CD8-positive, alpha-beta T cell (primary cell): ENCODE measurements at regions of chr12 and their contacts with region 1.

Region 1: DNA sequence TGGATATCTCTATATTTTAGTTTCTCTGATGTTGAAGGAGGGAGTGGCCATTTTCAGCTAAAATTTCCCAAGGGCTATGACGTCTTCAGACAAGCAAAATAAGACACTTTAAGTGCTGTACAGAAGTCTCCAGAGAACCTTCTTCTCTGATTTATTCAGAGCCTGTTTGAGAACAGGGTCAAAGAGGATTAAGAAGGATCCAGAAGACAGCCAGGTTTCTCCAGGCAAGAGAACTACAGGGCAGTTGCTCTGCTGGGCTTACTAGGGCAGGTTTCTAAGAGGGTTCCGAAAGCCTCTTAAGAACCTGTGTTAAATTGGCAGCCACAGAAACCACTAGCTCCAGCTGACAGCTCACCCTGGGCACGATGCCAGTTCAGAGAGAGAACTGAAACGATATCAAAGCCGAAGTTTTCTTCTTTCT is 1.2 kb downstream of the MGP start:
- DNase-seq: peak; percentile 69 to 94 (median 89)
- ATAC-seq: peak; percentile 90
- H3K4me3 ChIP-seq: no peak overlapping the region
- H3K4me3 Mint-ChIP-seq: peak overlapping the region; percentile 58
- H3K27ac ChIP-seq: peak overlapping the region in 1 of 2 experiments; percentile 7
- H3K27ac Mint-ChIP-seq: peak overlapping the region; percentile 89
- H3K4me1 ChIP-seq: peaks cover 38% of the 10 kb centered on the region
- H3K4me1 Mint-ChIP-seq: peaks cover 37% of the 10 kb centered on the region
- H3K27me3 ChIP-seq: peaks cover 0 to 6% of the 10 kb centered on the region in 2 experiments
- H3K27me3 Mint-ChIP-seq: peaks cover 7% of the 10 kb centered on the region
- CTCF ChIP-seq: no peak

Region 2: DNA sequence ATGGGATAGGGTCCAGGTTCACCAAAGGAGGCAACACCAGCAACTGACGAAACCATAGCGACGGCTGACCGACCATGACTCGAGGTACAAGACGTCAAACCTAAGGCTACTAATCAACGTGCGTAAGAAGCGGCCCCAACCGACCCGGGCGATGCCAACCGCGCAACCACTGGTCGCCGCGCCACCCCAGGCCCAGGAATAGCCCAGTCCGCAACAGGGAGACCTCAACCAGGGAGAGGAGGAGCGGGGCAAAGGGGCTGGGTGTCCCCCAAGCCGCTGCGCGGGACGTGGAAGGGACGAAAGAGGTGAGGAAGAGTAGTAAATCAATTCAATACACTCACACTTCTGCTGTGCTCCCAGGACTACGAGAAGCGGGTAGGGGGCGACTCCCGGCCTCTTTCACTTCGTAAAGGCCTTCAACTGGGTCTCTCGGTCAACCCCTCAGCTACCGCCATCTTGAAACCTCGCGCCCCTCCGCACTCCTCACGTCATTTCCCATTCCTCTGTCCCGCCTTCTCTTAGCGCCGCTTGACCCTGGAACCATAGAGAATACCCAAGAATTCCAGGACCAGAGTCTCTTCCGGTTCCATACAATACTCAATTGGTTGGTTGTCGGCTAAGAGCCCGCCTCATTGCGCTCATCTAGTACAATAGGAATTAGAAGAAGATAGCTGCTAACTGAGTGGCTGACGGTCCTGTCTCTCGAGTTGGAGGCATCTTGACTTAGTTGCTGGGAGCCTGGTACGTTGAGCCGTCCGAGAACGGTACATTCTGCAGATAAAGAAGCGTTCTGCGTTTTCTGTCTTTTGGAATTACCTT is 81.2 kb before region 1 on chr12 and contains the starts of genes C12orf60 and WBP11:
- CTCF ChIA-PET with region 1: no interaction called
- POLR2A ChIA-PET with region 1: no interaction called
- intact Hi-C with region 1: loop called in 1 of 2 experiments (anchors 5 kb)
- DNase-seq: peak; percentile 76 to 98 (median 87)
- ATAC-seq: peak; percentile 94
- H3K4me3 ChIP-seq: peak within 1 kb of the TSS; percentile 86 to 95
- H3K4me3 Mint-ChIP-seq: no peak within 1 kb of the TSS
- H3K27ac ChIP-seq: peak within 1 kb of the TSS; percentile 91 to 98
- H3K27ac Mint-ChIP-seq: no peak within 1 kb of the TSS
- H3K4me1 ChIP-seq: peaks cover 28% of the 10 kb centered on the region
- H3K4me1 Mint-ChIP-seq: peaks cover 12% of the 10 kb centered on the region
- H3K27me3 ChIP-seq: no peaks in the 10 kb centered on the region
- H3K27me3 Mint-ChIP-seq: no peaks in the 10 kb centered on the region
- CTCF ChIP-seq: no peak
- total RNA-seq, gene C12orf60: 0.14 TPM in 1 of 2 experiments, not detected in the other
- total RNA-seq, gene WBP11: 171 to 184 TPM

Region 3: GRCh38 chr12:14920475-14921126 is 36.1 kb after region 1 on chr12:
- CTCF ChIA-PET with region 1: no interaction called
- POLR2A ChIA-PET with region 1: no interaction called
- intact Hi-C with region 1: loop called in 1 of 2 experiments (anchors 5 kb)
- DNase-seq: peak in 2 of 9 experiments; percentile 32 to 40
- ATAC-seq: peak; percentile 65
- H3K4me3 ChIP-seq: no peak overlapping the region
- H3K4me3 Mint-ChIP-seq: peak overlapping the region; percentile 30
- H3K27ac ChIP-seq: peak overlapping the region in 1 of 2 experiments; percentile 36
- H3K27ac Mint-ChIP-seq: peak overlapping the region; percentile 83
- H3K4me1 ChIP-seq: peaks cover 23% of the 10 kb centered on the region
- H3K4me1 Mint-ChIP-seq: peaks cover 30% of the 10 kb centered on the region
- H3K27me3 ChIP-seq: no peaks in the 10 kb centered on the region
- H3K27me3 Mint-ChIP-seq: no peaks in the 10 kb centered on the region
- CTCF ChIP-seq: no peak

Region 4: DNA sequence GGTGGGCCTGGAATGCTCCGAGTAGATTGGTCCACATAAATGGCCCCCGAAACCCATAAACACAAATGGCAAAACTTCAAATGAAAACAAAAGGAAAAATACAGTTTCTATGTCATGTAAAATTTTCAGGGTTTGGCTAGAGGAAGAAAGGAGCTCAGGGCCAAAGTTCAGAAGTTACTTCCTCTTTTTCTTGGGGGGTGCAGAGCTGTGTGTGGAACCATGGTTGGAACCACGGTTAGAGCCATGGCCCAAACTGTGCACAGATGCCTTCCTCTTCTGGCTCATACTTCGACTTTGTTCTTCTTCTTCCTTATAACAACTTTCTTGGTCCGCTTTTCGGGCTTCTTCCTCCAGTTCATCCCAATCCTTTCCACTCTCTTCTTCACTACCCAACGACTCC is 1514.6 kb after region 1 on chr12:
- CTCF ChIA-PET with region 1: no interaction called
- POLR2A ChIA-PET with region 1: no interaction called
- intact Hi-C with region 1: no loop called
- DNase-seq: no peak
- ATAC-seq: no peak
- H3K4me3 ChIP-seq: no peak overlapping the region
- H3K4me3 Mint-ChIP-seq: no peak overlapping the region
- H3K27ac ChIP-seq: no peak overlapping the region
- H3K27ac Mint-ChIP-seq: no peak overlapping the region
- H3K4me1 ChIP-seq: no peaks in the 10 kb centered on the region
- H3K4me1 Mint-ChIP-seq: no peaks in the 10 kb centered on the region
- H3K27me3 ChIP-seq: no peaks in the 10 kb centered on the region
- H3K27me3 Mint-ChIP-seq: no peaks in the 10 kb centered on the region
- CTCF ChIP-seq: no peak